ENCODE measurements at regions of chr22 and their contacts with region 1.

Region 1: GRCh38 chr22:24189249-24190158 is 8.2 kb downstream of the SUSD2 start:
- DNase-seq: peak; percentile 75 to 81
- H3K4me3 ChIP-seq: no peak overlapping the region
- H3K27ac ChIP-seq: no peak overlapping the region
- H3K4me1 ChIP-seq: peaks cover 0 to 7% of the 10 kb centered on the region in 2 donors
- H3K27me3 ChIP-seq: no peaks in the 10 kb centered on the region
- CTCF ChIP-seq: peak; percentile 94 to 98 (median 95)
- POLR2A ChIP-seq: peak in 1 of 2 donors; percentile 37

Region 2: GRCh38 chr22:24247011-24247507 is 57.6 kb after region 1 on chr22:
- intact Hi-C with region 1: loop called (anchors 5 kb)
- DNase-seq: no peak
- H3K4me3 ChIP-seq: no peak overlapping the region
- H3K27ac ChIP-seq: peak overlapping the region; percentile 85 to 91
- H3K4me1 ChIP-seq: peaks cover 0 to 13% of the 10 kb centered on the region in 2 donors
- H3K27me3 ChIP-seq: no peaks in the 10 kb centered on the region
- CTCF ChIP-seq: no peak
- POLR2A ChIP-seq: no peak

Measured in uterus (tissue), 4 donors.